PC-9 (cell line): ENCODE measurements at regions of chr9 and their contacts with region 1.

Region 1: DNA sequence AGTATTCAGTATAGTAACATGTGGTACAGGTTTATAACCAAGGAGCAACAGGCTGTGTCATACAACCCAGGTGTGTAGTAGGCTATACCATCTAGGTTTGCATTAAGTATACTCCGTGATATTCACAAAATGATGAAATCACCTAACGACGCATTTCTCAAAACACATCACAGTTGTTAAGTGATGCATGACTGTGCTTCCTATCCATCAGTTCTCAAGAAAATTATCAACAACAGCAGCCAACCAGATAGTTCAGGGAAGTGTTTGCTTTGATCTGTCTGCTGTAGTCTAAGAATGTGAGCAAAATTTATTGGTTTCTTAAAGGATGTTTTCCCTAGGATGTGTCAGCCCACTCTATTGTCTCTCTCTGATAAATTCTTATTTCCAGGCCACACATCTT is 7.4 kb downstream of the ZBTB26 start:
- DNase-seq: no peak
- H3K4me3 ChIP-seq: no peak overlapping the region
- H3K27ac ChIP-seq: no peak overlapping the region
- H3K4me1 ChIP-seq: no peaks in the 10 kb centered on the region
- H3K27me3 ChIP-seq: no peaks in the 10 kb centered on the region
- CTCF ChIP-seq: no peak

Region 2: GRCh38 chr9:121529237-121529987 is 1394.5 kb before region 1 on chr9:
- CTCF ChIA-PET with region 1: no interaction called
- POLR2A ChIA-PET with region 1: interaction called, 18 read pairs
- intact Hi-C with region 1: no loop called
- DNase-seq: peak in 1 of 2 experiments; percentile 46
- H3K4me3 ChIP-seq: no peak overlapping the region
- H3K27ac ChIP-seq: no peak overlapping the region
- H3K4me1 ChIP-seq: no peaks in the 10 kb centered on the region
- H3K27me3 ChIP-seq: 0 out of 2 replicates have a peak, but pooled peaks cover 2% of the 10 kb centered on the region
- CTCF ChIP-seq: no peak

Region 3: DNA sequence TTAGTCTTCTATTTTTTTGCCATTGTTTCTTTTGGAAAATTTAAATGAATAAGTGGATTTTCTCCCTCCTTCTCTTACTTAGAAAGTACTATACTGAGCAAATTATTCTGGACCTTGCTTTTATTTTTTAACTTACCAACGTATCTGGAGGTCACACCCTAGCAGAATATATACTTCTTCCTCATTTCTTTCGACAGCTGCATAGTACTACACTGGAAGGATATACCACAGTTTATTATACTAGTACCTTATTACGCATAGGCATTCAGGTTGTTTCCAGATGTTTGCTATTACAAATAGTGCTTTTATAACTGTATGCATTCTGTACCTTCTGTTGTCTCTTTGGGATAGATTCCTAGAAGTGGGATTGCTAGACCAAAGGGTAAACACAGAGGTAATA is 35.5 kb before region 1 on chr9:
- CTCF ChIA-PET with region 1: no interaction called
- POLR2A ChIA-PET with region 1: no interaction called
- intact Hi-C with region 1: no loop called
- DNase-seq: no peak
- H3K4me3 ChIP-seq: no peak overlapping the region
- H3K27ac ChIP-seq: no peak overlapping the region
- H3K4me1 ChIP-seq: no peaks in the 10 kb centered on the region
- H3K27me3 ChIP-seq: no peaks in the 10 kb centered on the region
- CTCF ChIP-seq: no peak

Region 4: DNA sequence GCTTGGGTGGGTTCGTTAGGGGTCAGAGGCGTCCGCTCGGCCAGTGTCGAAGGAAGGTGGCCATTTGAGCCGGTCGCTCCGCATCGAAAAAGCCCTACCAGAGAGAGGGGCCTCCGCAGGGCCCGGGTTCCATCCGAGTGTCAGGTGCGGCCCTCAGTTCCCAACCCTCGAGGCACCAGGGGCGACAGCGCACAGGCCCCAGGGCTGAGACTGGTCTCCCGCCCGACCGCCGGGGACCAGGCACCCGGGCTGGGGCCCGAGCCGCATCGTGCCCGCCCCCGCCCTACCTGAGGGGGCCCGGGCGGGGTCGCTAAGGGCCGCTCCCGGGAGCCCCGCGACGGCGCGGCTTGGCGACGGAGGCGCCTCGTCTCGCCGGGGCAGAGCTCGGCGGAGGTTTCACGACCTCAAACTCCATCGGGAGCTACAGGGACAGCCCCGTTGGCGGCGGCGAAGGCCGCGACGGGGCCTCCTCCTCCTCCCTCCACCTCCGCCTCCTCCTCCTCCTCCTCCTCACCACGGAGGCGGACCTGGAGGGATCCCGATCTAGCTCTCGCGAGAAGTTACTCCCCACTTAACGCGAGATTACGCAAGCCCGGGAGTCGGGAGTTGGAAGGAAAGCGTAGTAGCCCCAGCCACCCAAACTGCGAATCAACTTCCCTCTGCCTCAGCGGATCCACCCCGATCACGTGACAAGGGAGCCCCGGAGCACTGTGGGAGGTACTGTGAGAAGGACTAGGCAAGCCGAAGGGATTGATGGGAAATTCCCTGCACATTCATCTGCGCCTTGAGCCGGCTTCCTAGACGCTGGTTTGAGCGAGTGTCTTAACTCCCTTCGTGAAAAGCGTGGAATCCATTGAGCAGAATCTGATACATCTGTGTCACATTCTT is 18.9 kb before region 1 on chr9 and contains the start of gene RC3H2:
- CTCF ChIA-PET with region 1: no interaction called
- POLR2A ChIA-PET with region 1: interaction called, 19 read pairs
- intact Hi-C with region 1: no loop called
- DNase-seq: peak; percentile 98 to 99
- H3K4me3 ChIP-seq: peak within 1 kb of the TSS; percentile 100
- H3K27ac ChIP-seq: peak within 1 kb of the TSS; percentile 80
- H3K4me1 ChIP-seq: peaks cover 19% of the 10 kb centered on the region
- H3K27me3 ChIP-seq: no peaks in the 10 kb centered on the region
- CTCF ChIP-seq: no peak
- total RNA-seq, gene RC3H2: 58.8 and 59.3 TPM in 2 replicates

Region 5: GRCh38 chr9:123102375-123103110 is 178.6 kb after region 1 on chr9:
- CTCF ChIA-PET with region 1: no interaction called
- POLR2A ChIA-PET with region 1: no interaction called
- intact Hi-C with region 1: no loop called
- DNase-seq: peak in 1 of 2 experiments; percentile 34
- H3K4me3 ChIP-seq: no peak overlapping the region
- H3K27ac ChIP-seq: no peak overlapping the region
- H3K4me1 ChIP-seq: no peaks in the 10 kb centered on the region
- H3K27me3 ChIP-seq: no peaks in the 10 kb centered on the region
- CTCF ChIP-seq: peak; percentile 55